ENCODE measurements at regions of chr4 and their contacts with region 1.

Region 1: GRCh38 chr4:146916479-146917076 is 29.1 kb downstream of the TTC29 start:
- DNase-seq: peak; percentile 10
- ATAC-seq: no peak
- H3K4me3 ChIP-seq: no peak overlapping the region
- H3K27ac ChIP-seq: no peak overlapping the region
- H3K4me1 ChIP-seq: no peaks in the 10 kb centered on the region
- H3K27me3 ChIP-seq: no peaks in the 10 kb centered on the region; a peak in 2 of 5 replicates
- CTCF ChIP-seq: peak; percentile 65
- EP300 ChIP-seq: no peak
- POLR2A ChIP-seq: no peak
- RAD21 ChIP-seq: peak; percentile 38; the same call in 1 of the 2 replicates

Region 2: DNA sequence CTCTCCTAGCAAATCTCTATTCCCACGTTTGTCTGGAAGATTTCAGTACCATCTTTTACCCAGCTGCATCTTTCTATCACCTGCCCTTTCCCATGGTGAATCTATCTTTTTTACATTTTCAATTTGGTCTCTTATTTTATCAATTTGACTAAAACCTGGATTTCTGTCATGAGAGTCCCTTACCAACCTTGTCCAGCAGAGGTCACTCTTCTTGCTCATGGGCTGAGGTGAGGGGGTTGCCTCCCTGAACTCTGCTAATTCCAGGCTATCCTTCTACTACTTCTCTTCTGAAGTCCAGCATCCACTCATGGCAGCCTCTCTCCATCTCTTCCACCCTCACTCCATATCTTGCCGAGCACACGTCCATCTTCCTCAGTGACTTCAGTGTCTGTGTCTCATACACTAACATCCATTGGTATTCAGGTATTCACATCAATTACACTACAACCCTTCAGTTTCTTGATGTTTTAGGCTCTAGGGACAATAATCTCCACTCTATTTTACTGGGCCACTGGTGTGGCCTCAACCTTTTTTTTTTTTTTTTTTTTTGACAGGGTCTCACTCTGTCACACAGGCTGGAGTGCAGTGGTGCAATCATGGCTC is 960.2 kb before region 1 on chr4:
- CTCF ChIA-PET with region 1: no interaction called
- POLR2A ChIA-PET with region 1: no interaction called
- in situ Hi-C with region 1: loop called (anchors 10 kb)
- intact Hi-C with region 1: loop called (anchors 1 kb)
- DNase-seq: peak; percentile 40
- ATAC-seq: peak; percentile 78
- H3K4me3 ChIP-seq: no peak overlapping the region
- H3K27ac ChIP-seq: no peak overlapping the region
- H3K4me1 ChIP-seq: no peaks in the 10 kb centered on the region
- H3K27me3 ChIP-seq: no peaks in the 10 kb centered on the region; a peak in 3 of 5 replicates
- CTCF ChIP-seq: peak; percentile 73
- EP300 ChIP-seq: no peak
- POLR2A ChIP-seq: no peak
- RAD21 ChIP-seq: no peak

Region 3: GRCh38 chr4:146095091-146095690 is 821.4 kb before region 1 on chr4:
- CTCF ChIA-PET with region 1: interaction called, 6 read pairs
- POLR2A ChIA-PET with region 1: no interaction called
- in situ Hi-C with region 1: loop called (anchors 25 kb)
- intact Hi-C with region 1: loop called (anchors 1 kb)
- DNase-seq: peak; percentile 32
- ATAC-seq: no peak
- H3K4me3 ChIP-seq: no peak overlapping the region
- H3K27ac ChIP-seq: no peak overlapping the region
- H3K4me1 ChIP-seq: no peaks in the 10 kb centered on the region
- H3K27me3 ChIP-seq: 0 out of 5 replicates have a peak, but pooled peaks cover 0 to 2% of the 10 kb centered on the region in 2 experiments
- CTCF ChIP-seq: peak; percentile 65
- EP300 ChIP-seq: no peak
- POLR2A ChIP-seq: no peak
- RAD21 ChIP-seq: no peak

Region 4: DNA sequence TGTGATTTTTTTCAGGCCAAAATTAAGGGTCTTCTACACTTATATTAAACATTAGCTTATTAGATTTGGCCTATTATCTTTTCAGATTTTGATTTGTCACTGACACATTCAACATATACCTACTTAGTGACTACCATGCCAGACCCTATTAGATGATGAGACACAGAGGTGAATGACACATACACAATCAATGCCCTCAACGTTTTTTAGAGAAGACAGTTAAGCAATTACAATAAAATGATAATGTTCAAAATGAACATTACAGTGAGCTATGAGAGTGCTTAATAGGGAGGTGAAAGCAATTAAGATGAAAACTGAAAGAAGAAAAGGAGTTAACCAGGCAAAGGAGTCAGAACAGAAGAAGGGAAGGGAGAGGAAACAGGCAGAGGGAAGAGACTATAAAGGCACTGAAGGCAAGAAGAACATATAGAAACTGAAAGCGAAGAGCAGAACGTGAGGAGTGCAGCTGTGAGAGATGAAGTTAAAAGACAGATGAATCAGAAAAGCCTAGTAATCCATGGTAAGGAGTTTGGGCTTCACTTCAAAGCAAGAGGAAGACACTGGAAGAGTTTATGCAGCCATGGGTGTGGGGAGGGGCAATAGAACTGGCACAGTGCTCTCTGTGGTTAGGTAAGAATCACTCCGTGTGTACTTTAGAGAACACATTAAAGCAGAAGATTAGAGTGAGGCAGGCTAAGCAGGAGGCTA is 583.2 kb before region 1 on chr4:
- CTCF ChIA-PET with region 1: no interaction called
- POLR2A ChIA-PET with region 1: no interaction called
- in situ Hi-C with region 1: loop called (anchors 10 kb)
- intact Hi-C with region 1: no loop called
- DNase-seq: peak; percentile 7
- ATAC-seq: peak; percentile 44; the same call in 1 of the 3 replicates
- H3K4me3 ChIP-seq: no peak overlapping the region
- H3K27ac ChIP-seq: no peak overlapping the region
- H3K4me1 ChIP-seq: peaks cover 25% of the 10 kb centered on the region
- H3K27me3 ChIP-seq: no peaks in the 10 kb centered on the region
- CTCF ChIP-seq: no peak
- EP300 ChIP-seq: no peak
- POLR2A ChIP-seq: no peak
- RAD21 ChIP-seq: no peak

Region 5: GRCh38 chr4:146342600-146343192 is 573.9 kb before region 1 on chr4:
- CTCF ChIA-PET with region 1: interaction called, 16 read pairs
- POLR2A ChIA-PET with region 1: no interaction called
- in situ Hi-C with region 1: loop called (anchors 10 kb)
- intact Hi-C with region 1: loop called (anchors 1 kb)
- DNase-seq: no peak
- ATAC-seq: no peak
- H3K4me3 ChIP-seq: no peak overlapping the region
- H3K27ac ChIP-seq: no peak overlapping the region
- H3K4me1 ChIP-seq: no peaks in the 10 kb centered on the region
- H3K27me3 ChIP-seq: no peaks in the 10 kb centered on the region
- CTCF ChIP-seq: peak; percentile 37
- EP300 ChIP-seq: no peak
- POLR2A ChIP-seq: no peak
- RAD21 ChIP-seq: no peak

Region 6: DNA sequence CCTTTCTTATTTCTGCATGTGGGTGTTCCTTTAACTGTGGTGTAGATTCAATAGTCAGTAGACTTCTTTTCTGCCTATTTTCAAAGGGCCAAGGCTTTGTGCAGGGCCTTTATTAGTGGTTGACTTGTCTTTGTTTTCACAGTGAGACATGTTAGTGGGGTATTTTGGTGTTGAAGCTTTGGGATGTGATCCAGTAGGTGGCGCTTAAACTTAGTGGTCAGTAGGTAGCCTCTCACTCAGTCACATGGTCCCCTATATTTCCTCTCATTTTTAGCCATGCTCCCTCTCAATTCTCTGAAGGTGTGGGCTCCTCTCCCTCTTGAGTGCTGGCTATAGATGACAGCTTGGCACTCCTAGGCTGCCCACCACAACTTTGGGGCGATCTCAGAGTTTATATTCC is 371.5 kb before region 1 on chr4:
- CTCF ChIA-PET with region 1: interaction called, 7 read pairs
- POLR2A ChIA-PET with region 1: no interaction called
- in situ Hi-C with region 1: loop called (anchors 10 kb)
- intact Hi-C with region 1: no loop called
- DNase-seq: peak; percentile 27
- ATAC-seq: peak; percentile 94
- H3K4me3 ChIP-seq: no peak overlapping the region
- H3K27ac ChIP-seq: no peak overlapping the region
- H3K4me1 ChIP-seq: no peaks in the 10 kb centered on the region
- H3K27me3 ChIP-seq: no peaks in the 10 kb centered on the region
- CTCF ChIP-seq: peak; percentile 54
- EP300 ChIP-seq: no peak
- POLR2A ChIP-seq: no peak
- RAD21 ChIP-seq: peak; percentile 26; the same call in 1 of the 2 replicates

Measured in HepG2 (cell line).